Breast epithelium (tissue), 4 donors: ENCODE measurements at regions of chr16 and their contacts with region 1.

Region 1: DNA sequence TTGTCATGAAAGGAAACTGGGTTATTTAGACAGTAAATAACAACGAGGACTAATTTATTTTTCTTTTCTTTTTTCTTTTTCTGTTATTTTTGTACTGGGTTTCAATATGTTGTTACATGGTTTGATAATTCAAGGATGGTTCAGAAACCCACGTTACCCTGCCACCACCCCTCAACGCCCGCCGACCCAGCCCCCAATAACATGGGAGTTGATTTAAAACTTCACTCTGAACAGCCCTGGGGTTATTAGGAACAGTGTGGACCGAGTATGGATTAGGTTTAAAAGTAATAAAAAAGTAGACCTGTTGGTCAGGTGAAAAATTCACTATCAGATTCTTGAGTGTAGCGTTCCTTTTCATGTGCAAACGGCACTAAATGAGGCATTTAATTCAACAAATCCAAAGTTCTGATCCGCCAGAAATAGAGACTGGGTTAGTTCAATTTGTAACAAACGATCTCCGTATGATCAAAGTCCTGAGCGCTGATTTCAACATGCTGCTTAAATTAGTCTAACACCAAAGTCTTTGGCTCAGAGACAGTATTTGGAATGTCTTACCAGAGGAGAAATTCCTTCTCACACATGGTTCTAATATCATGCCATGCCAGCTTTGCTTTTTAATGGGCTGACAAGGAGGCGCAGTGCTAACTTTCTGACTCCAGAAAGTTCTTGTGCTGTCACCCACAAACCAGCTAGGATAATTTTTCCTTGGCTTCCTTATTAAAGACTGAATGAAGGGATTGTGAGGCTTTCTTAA is 173.1 kb upstream of the IRX3 start:
- DNase-seq: no peak
- H3K4me3 ChIP-seq: no peak overlapping the region
- H3K27ac ChIP-seq: no peak overlapping the region
- H3K4me1 ChIP-seq: no peaks in the 10 kb centered on the region
- H3K27me3 ChIP-seq: no peaks in the 10 kb centered on the region
- CTCF ChIP-seq: no peak
- POLR2A ChIP-seq: no peak

Region 2: GRCh38 chr16:54480429-54480828 is 20.7 kb after region 1 on chr16:
- intact Hi-C with region 1: loop called (anchors 1 kb)
- DNase-seq: no peak
- H3K4me3 ChIP-seq: no peak overlapping the region
- H3K27ac ChIP-seq: no peak overlapping the region
- H3K4me1 ChIP-seq: no peaks in the 10 kb centered on the region
- H3K27me3 ChIP-seq: no peaks in the 10 kb centered on the region
- CTCF ChIP-seq: no peak
- POLR2A ChIP-seq: no peak

Region 3: DNA sequence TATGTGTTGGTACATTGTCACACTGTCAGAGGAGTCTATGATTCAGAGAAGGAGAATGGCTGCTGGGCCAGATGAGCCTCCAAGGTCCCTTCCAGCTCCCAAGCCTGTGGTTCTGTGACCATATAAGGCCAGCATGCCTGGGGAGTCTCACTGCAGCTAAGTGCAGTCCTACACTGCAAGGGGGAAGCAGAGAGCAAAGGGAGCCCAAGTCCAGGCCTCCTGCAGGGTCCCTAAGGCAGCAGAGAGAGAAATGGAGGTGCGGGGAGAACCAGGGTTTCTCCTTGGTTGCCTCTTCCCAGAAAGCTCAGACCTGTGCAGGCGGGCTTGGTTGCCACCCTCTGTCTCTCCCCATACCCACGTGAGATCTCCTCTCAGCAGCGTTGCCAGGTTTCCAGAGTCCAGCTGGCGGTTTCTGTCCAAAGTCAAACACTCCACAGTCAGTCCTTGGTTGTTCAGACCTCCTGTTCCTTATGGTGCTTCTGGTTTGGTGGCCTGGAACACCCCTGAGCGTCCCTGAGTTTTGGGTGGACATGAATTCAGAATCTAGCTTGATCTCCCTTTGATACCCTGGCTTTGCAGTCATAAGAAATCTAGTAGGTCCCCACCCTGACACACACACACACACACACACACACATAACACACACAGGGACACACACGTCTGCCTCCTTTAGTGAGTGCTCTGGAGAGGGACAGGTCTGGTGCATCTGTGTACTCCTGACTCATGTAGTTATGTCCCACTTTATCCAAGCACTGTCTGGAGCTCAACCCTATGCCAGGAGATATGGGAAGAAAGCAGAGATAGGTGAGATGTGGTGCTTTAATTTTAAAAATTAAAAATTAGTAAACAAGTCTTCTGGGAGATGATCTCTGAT is 1810.4 kb after region 1 on chr16:
- intact Hi-C with region 1: no loop called
- DNase-seq: no peak
- H3K4me3 ChIP-seq: no peak overlapping the region
- H3K27ac ChIP-seq: no peak overlapping the region
- H3K4me1 ChIP-seq: no peaks in the 10 kb centered on the region
- H3K27me3 ChIP-seq: no peaks in the 10 kb centered on the region
- CTCF ChIP-seq: no peak
- POLR2A ChIP-seq: no peak